ENCODE measurements at regions of chr2 and their contacts with region 1.

Region 1: GRCh38 chr2:152717228-152718075 is at the start of gene PRPF40A:
- DNase-seq: peak; percentile 98
- H3K4me3 Mint-ChIP-seq: peak within 1 kb of the TSS; percentile 100
- H3K27ac Mint-ChIP-seq: peak within 1 kb of the TSS; percentile 97
- H3K4me1 Mint-ChIP-seq: peaks cover 56% of the 10 kb centered on the region
- H3K27me3 Mint-ChIP-seq: peaks cover 1% of the 10 kb centered on the region
- total RNA-seq, gene PRPF40A: 152 and 172 TPM in 2 replicates

Region 2: GRCh38 chr2:151289369-151290088 is 1427.9 kb before region 1 on chr2 and contains the start of gene NMI:
- intact Hi-C with region 1: loop called (anchors 5 kb)
- DNase-seq: peak; percentile 74
- H3K4me3 Mint-ChIP-seq: peak within 1 kb of the TSS; percentile 88
- H3K27ac Mint-ChIP-seq: peak within 1 kb of the TSS; percentile 98
- H3K4me1 Mint-ChIP-seq: peaks cover 44% of the 10 kb centered on the region
- H3K27me3 Mint-ChIP-seq: peaks cover 8% of the 10 kb centered on the region
- total RNA-seq, gene NMI: 36.8 and 40.1 TPM in 2 replicates

Region 3: DNA sequence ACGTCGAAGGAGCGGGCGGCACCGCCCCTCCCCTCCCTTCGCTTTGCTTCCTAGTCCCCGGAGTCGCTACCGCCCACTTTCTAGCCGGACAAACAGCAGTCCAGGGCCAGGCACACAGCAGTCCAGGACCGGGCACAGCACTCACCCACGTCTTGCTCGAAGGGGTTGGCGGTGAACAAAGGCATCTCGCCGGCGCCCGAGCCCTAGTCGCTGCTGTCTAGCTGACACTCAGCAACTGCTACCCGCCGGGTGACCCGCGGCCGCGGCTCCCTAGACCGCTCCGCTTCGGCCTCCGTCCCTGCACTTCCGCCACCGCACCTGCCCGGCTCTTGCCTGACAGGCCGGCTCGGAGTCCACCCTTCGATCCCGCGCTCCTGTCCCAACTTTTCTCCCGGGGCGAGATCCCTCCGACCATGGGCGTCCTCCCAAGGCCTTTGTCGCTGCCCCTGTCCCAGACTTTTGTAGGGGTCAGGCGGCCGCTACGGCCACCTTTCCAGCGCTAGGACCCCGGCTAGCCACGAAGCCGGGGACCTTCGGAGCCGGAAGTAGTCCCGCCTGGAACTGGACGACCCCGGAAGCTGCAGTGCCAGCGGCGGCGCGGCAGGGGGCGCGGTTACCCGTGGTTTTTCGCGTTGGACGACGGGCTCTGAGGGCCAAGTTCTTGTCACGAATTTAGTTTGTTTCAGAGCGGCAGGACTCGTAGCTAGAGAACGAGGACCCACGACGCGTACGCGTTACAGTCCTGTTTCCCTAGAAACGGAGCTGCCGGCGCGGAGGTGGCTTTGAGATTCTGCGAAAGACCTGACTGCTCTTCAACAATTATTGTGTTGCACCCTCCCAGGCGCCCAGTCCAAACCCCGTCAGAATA is 541.8 kb before region 1 on chr2 and contains the start of gene STAM2:
- intact Hi-C with region 1: loop called (anchors 1 kb)
- DNase-seq: peak; percentile 91
- H3K4me3 Mint-ChIP-seq: peak within 1 kb of the TSS; percentile 95
- H3K27ac Mint-ChIP-seq: peak within 1 kb of the TSS; percentile 96
- H3K4me1 Mint-ChIP-seq: peaks cover 38% of the 10 kb centered on the region
- H3K27me3 Mint-ChIP-seq: peaks cover 3% of the 10 kb centered on the region
- total RNA-seq, gene STAM2: 18.6 and 20.0 TPM in 2 replicates

Region 4: GRCh38 chr2:152573168-152573567 is 144.3 kb before region 1 on chr2:
- intact Hi-C with region 1: loop called (anchors 1 kb)
- DNase-seq: peak; percentile 7
- H3K4me3 Mint-ChIP-seq: no peak overlapping the region
- H3K27ac Mint-ChIP-seq: no peak overlapping the region
- H3K4me1 Mint-ChIP-seq: peaks cover 9% of the 10 kb centered on the region
- H3K27me3 Mint-ChIP-seq: peaks cover 6% of the 10 kb centered on the region

Region 5: DNA sequence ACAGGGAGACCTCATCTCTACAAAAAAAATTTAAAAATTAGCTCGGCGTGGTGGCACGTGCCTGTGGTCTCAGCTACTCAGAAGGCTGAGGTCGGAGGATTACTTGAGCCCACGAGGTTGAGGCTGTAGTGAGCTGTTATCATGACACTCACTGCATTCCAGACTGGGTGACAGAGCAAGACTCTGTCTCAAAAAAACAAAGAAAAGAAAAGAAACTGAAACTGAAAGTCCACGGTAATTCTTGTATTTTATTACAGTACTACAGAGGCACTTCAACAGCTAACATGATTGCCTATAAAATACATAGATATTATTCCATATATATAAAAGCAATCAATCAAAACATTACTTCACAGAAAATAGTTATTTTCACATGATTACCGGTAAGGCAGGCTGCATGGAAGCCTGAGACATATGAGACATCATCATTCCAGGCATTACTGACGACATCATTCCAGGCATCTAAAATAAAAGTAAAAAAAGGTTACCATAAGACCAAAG is 23.2 kb before region 1 on chr2:
- intact Hi-C with region 1: loop called (anchors 1 kb)
- DNase-seq: peak; percentile 35
- H3K4me3 Mint-ChIP-seq: peak overlapping the region; percentile 79
- H3K27ac Mint-ChIP-seq: peak overlapping the region; percentile 89
- H3K4me1 Mint-ChIP-seq: peaks cover 34% of the 10 kb centered on the region
- H3K27me3 Mint-ChIP-seq: no peaks in the 10 kb centered on the region

Region 6: GRCh38 chr2:152706477-152707020 is 10.9 kb before region 1 on chr2:
- intact Hi-C with region 1: no loop called
- DNase-seq: no peak
- H3K4me3 Mint-ChIP-seq: no peak overlapping the region
- H3K27ac Mint-ChIP-seq: no peak overlapping the region
- H3K4me1 Mint-ChIP-seq: peaks cover 38% of the 10 kb centered on the region
- H3K27me3 Mint-ChIP-seq: no peaks in the 10 kb centered on the region

Region 7: GRCh38 chr2:152740743-152741328 is 23.4 kb after region 1 on chr2:
- intact Hi-C with region 1: loop called (anchors 2 kb)
- DNase-seq: no peak
- H3K4me3 Mint-ChIP-seq: no peak overlapping the region
- H3K27ac Mint-ChIP-seq: no peak overlapping the region
- H3K4me1 Mint-ChIP-seq: no peaks in the 10 kb centered on the region
- H3K27me3 Mint-ChIP-seq: peaks cover 1% of the 10 kb centered on the region

Region 8: DNA sequence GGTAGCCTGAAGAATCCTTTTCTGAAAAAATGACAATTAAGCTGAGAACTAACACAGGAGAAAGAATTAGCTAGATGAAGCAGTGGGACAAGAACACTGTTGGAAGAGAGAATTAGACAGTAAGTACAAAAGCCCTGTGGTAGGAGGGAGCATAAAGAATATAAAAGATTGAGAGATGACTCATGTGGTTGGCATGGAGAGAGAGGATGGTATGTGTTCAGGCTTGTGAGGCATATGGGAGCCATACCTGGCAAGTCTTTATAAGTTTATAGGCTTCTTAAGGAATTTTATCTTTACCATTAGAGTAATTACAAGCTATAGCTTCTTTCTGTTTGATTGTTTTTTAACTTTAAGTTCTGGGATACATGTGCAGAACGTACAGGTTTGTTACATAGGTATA is 325.9 kb after region 1 on chr2:
- intact Hi-C with region 1: no loop called
- DNase-seq: no peak
- H3K4me3 Mint-ChIP-seq: no peak overlapping the region
- H3K27ac Mint-ChIP-seq: no peak overlapping the region
- H3K4me1 Mint-ChIP-seq: no peaks in the 10 kb centered on the region
- H3K27me3 Mint-ChIP-seq: no peaks in the 10 kb centered on the region